Endothelial cell of umbilical vein (primary cell): ENCODE measurements at regions of chr12 and their contacts with region 1.

Region 1: GRCh38 chr12:575948-576612 is 87.2 kb downstream of the NINJ2 start:
- DNase-seq: peak; percentile 56
- H3K4me3 ChIP-seq: no peak overlapping the region
- H3K27ac ChIP-seq: no peak overlapping the region
- H3K4me1 ChIP-seq: peaks cover 22% of the 10 kb centered on the region
- H3K27me3 ChIP-seq: no peaks in the 10 kb centered on the region
- CTCF ChIP-seq: peak; percentile 94 to 98
- POLR2A ChIP-seq: no peak

Region 2: DNA sequence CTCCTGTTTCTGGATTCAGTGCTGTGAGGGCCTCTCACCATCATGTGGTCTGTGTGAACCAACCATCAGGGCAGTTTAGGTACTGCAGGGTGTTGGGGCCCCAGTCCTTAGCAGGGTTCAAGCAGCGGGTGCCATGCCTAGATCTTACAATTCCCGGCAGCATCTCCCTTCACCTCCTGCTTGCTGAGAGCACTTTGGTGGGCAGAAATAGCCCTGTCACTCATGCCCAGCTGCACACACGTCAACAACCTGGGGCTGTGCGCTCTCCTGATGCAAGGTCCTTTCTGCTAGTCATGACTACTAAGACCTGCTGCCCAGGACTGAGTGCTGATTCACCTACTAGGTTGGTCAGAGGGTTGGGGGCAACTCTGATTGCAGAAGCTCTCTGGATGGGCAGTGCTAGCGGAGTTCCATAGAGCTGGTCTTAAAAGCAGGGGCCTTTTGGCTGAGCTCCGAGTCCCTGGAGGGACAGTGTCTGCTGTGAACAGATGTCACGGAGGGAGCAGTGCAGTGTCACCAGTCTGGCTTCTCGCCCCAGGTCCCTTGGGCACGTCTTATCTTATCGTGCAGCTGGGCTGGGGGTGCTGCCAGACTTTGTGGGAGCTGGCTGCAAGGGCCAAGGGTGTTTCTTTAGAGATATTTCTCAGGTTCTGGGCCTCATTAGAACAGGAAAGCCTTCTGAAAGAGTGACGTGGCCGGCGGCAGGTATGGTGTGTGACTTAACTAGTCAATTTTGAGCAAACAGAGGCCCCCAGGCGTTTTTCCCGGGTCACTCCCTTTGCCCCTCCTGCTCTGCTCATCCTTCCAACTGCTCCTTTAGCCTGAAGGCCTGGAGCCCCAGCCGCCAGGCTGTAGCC is 15.3 kb after region 1 on chr12:
- CTCF ChIA-PET with region 1: interaction called, 12 read pairs
- POLR2A ChIA-PET with region 1: no interaction called
- dilution Hi-C with region 1: no loop called
- intact Hi-C with region 1: no loop called
- DNase-seq: no peak
- H3K4me3 ChIP-seq: no peak overlapping the region
- H3K27ac ChIP-seq: no peak overlapping the region
- H3K4me1 ChIP-seq: no peaks in the 10 kb centered on the region
- H3K27me3 ChIP-seq: peaks cover 3 to 7% of the 10 kb centered on the region in 2 experiments
- CTCF ChIP-seq: no peak
- POLR2A ChIP-seq: no peak

Region 3: DNA sequence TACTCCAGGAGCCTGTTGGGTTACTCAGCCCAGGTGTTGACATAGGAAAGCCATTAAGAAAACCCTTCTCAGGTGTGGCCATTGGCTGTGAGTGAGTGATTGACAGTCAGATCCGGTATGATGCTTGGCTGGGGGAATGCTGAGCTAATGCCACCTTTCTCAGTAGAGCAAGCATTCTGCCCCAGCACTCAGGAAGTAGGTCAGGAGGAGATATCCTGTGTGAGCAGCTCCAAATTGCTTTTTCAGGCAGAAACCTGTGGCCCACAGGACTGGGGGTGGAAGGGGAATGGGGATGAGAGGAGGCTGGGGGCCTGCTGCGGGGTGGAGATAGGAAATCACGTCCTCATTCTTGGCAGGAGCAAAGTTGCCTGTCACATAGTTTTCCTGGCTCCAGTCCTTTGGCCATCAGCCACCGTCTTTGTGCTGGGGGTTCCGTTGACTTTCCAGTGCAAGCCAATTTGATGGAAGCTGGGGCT is 31.5 kb after region 1 on chr12:
- CTCF ChIA-PET with region 1: interaction called, 19 read pairs
- POLR2A ChIA-PET with region 1: no interaction called
- dilution Hi-C with region 1: no loop called
- intact Hi-C with region 1: loop called (anchors 1 kb)
- DNase-seq: peak; percentile 88
- H3K4me3 ChIP-seq: no peak overlapping the region
- H3K27ac ChIP-seq: peak overlapping the region; percentile 2
- H3K4me1 ChIP-seq: peaks cover 28% of the 10 kb centered on the region
- H3K27me3 ChIP-seq: no peaks in the 10 kb centered on the region
- CTCF ChIP-seq: no peak
- POLR2A ChIP-seq: no peak

Region 4: GRCh38 chr12:630656-631632 is 54.9 kb after region 1 on chr12:
- CTCF ChIA-PET with region 1: interaction called, 10 read pairs
- POLR2A ChIA-PET with region 1: no interaction called
- dilution Hi-C with region 1: no loop called
- intact Hi-C with region 1: loop called (anchors 1 kb)
- DNase-seq: peak; percentile 28
- H3K4me3 ChIP-seq: no peak overlapping the region
- H3K27ac ChIP-seq: peak overlapping the region; percentile 89
- H3K4me1 ChIP-seq: peaks cover 28% of the 10 kb centered on the region
- H3K27me3 ChIP-seq: no peaks in the 10 kb centered on the region
- CTCF ChIP-seq: no peak
- POLR2A ChIP-seq: no peak

Region 5: DNA sequence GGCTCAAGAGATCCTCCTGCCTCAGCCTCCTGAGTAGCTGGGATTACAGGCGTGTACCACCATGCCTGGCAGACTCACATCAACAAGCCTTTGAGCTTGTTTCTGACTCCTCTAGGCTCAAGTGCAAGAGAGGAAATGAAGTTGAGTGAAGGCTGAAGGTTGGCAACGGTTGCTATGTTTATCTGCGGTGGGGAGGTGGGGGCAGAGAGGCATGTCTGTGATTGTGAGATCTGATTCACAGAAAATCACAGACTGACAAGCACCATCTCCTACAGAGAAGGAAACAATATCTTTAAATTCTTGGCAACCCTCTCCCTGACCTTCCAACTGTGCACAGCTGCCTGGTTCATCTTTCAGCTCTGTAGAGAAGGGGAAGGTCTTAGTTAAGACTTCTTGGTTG is 109.3 kb after region 1 on chr12:
- CTCF ChIA-PET with region 1: no interaction called
- POLR2A ChIA-PET with region 1: no interaction called
- dilution Hi-C with region 1: no loop called
- intact Hi-C with region 1: no loop called
- DNase-seq: peak; percentile 77
- H3K4me3 ChIP-seq: no peak overlapping the region
- H3K27ac ChIP-seq: no peak overlapping the region
- H3K4me1 ChIP-seq: no peaks in the 10 kb centered on the region
- H3K27me3 ChIP-seq: no peaks in the 10 kb centered on the region
- CTCF ChIP-seq: no peak
- POLR2A ChIP-seq: no peak

Region 6: GRCh38 chr12:810671-811415 is 234.8 kb after region 1 on chr12:
- CTCF ChIA-PET with region 1: interaction called, 47 read pairs
- POLR2A ChIA-PET with region 1: no interaction called
- dilution Hi-C with region 1: no loop called
- intact Hi-C with region 1: loop called (anchors 1 kb)
- DNase-seq: no peak
- H3K4me3 ChIP-seq: no peak overlapping the region
- H3K27ac ChIP-seq: no peak overlapping the region
- H3K4me1 ChIP-seq: peaks cover 13% of the 10 kb centered on the region
- H3K27me3 ChIP-seq: no peaks in the 10 kb centered on the region
- CTCF ChIP-seq: no peak
- POLR2A ChIP-seq: no peak

Region 7: DNA sequence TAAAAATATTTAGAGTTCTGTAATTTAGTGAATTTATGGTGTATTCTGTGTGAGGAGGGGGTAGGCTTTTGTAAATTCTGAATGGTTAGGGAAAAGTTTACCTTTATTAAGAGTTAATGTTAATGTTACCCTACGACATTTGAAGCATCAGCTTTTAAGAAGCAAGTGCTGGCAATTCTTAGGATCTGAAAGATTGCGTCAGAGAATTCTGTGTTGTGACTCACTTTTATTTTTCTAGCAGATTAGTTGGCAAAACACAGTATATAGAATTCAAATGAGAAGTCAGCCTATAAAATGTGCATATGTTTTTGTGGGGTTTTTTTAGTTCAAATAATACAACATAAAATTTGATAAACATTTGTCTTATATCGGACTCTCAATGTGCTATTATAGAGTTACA is 275.8 kb after region 1 on chr12:
- CTCF ChIA-PET with region 1: no interaction called
- POLR2A ChIA-PET with region 1: no interaction called
- dilution Hi-C with region 1: no loop called
- intact Hi-C with region 1: no loop called
- DNase-seq: peak; percentile 76
- H3K4me3 ChIP-seq: no peak overlapping the region
- H3K27ac ChIP-seq: peak overlapping the region; percentile 52
- H3K4me1 ChIP-seq: peaks cover 12% of the 10 kb centered on the region
- H3K27me3 ChIP-seq: no peaks in the 10 kb centered on the region
- CTCF ChIP-seq: no peak
- POLR2A ChIP-seq: no peak